ENCODE measurements at regions of chr16 and their contacts with region 1.

Region 1: DNA sequence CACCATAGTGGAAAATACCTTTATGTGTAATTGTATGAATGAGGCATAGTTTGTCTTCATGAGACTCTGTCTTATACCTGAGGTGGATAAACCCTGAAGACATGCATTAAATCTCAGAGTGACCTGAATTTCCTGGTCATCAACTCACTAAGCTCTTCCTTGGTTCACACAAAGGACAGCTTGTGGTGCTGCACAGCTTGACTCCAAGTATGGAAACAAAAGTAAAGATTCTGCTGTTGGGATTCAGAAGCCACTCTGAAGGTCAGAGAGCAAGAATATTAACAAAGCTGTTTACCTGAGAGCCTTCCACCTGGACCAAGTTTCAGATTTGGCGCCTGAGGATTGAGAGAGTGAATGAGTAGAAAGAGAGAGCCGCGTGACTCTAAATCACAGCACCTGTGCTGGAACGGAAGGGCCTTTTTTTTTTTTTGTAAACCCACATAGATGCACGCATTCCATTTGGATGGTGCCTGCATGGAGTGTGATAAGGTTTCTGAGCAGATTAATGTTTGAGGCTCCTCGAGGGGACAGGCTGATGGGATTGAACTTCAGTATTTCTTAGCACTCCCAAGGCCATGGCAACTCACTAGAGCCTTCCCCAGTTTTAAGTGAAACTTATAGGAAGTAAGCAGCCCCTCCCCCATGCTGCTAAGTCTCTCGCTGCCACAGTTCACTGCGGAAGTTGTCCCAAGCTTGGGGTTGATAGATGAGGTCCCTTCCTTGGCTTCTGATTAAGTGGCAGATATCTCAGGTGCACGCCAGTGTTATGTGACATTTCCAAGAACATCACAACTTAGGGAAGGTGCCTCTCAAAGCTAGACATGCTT is 28.7 kb downstream of the CALB2 start:
- DNase-seq: no peak
- ATAC-seq: no peak
- H3K4me3 ChIP-seq: no peak overlapping the region
- H3K27ac ChIP-seq: no peak overlapping the region
- H3K4me1 ChIP-seq: no peaks in the 10 kb centered on the region
- H3K27me3 ChIP-seq: peaks cover 0 to 2% of the 10 kb centered on the region in 2 experiments; a peak in 3 of 4 replicates
- CTCF ChIP-seq: no peak
- EP300 ChIP-seq: no peak
- POLR2A ChIP-seq: no peak
- RAD21 ChIP-seq: no peak

Region 2: GRCh38 chr16:71367241-71367976 is 19.8 kb before region 1 on chr16:
- CTCF ChIA-PET with region 1: no interaction called
- POLR2A ChIA-PET with region 1: no interaction called
- RAD21 ChIA-PET with region 1: no interaction called
- SMC1A ChIA-PET with region 1: no interaction called
- in situ Hi-C with region 1: no loop called
- intact Hi-C with region 1: loop called (anchors 1 kb)
- DNase-seq: peak; percentile 2
- ATAC-seq: peak; percentile 93
- H3K4me3 ChIP-seq: no peak overlapping the region
- H3K27ac ChIP-seq: no peak overlapping the region
- H3K4me1 ChIP-seq: no peaks in the 10 kb centered on the region
- H3K27me3 ChIP-seq: no peaks in the 10 kb centered on the region; a peak in 3 of 4 replicates
- CTCF ChIP-seq: peak; percentile 67 to 78 (median 74)
- EP300 ChIP-seq: no peak
- POLR2A ChIP-seq: no peak
- RAD21 ChIP-seq: peak; percentile 11; the same call in 1 of the 2 replicates

Region 3: GRCh38 chr16:71461686-71462648 is 74.7 kb after region 1 on chr16 and contains the start of gene ZNF23:
- CTCF ChIA-PET with region 1: no interaction called
- POLR2A ChIA-PET with region 1: no interaction called
- RAD21 ChIA-PET with region 1: no interaction called
- SMC1A ChIA-PET with region 1: no interaction called
- in situ Hi-C with region 1: no loop called
- intact Hi-C with region 1: no loop called
- DNase-seq: peak; percentile 39
- ATAC-seq: peak; percentile 98
- H3K4me3 ChIP-seq: peak within 1 kb of the TSS; percentile 90
- H3K27ac ChIP-seq: peak within 1 kb of the TSS; percentile 74
- H3K4me1 ChIP-seq: no peaks in the 10 kb centered on the region
- H3K27me3 ChIP-seq: no peaks in the 10 kb centered on the region
- CTCF ChIP-seq: peak; percentile 9 to 23 (median 22); a peak in 3 of 6 replicates
- EP300 ChIP-seq: no peak
- POLR2A ChIP-seq: peak; percentile 99
- RAD21 ChIP-seq: no peak
- polyA plus RNA-seq, gene ZNF23: 3.6 to 4.8 TPM

Region 4: DNA sequence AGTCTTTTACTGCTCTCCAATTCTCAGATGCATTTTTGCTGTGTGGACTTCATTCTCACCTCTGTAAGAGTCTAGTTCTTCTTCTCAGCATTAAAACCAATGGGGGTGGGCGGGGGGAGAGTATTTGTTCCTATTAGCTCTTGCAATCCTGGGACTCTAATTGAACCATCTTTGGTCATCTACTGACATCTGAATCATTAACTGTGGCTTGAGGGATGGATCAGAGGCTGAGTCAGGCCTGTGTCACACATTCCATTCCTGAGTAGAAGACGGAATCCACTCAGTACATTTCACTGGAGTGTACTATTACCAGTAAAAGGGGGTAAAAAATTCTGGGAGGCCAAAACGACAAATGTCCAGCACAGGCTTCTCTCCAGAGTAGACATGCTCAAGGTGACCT is 87.6 kb after region 1 on chr16:
- CTCF ChIA-PET with region 1: no interaction called
- POLR2A ChIA-PET with region 1: no interaction called
- RAD21 ChIA-PET with region 1: no interaction called
- SMC1A ChIA-PET with region 1: no interaction called
- in situ Hi-C with region 1: no loop called
- intact Hi-C with region 1: no loop called
- DNase-seq: no peak
- ATAC-seq: no peak
- H3K4me3 ChIP-seq: no peak overlapping the region
- H3K27ac ChIP-seq: no peak overlapping the region
- H3K4me1 ChIP-seq: no peaks in the 10 kb centered on the region; the same call in 1 of the 2 replicates
- H3K27me3 ChIP-seq: no peaks in the 10 kb centered on the region
- CTCF ChIP-seq: no peak
- EP300 ChIP-seq: no peak
- POLR2A ChIP-seq: no peak
- RAD21 ChIP-seq: no peak